ENCODE measurements at regions of chr17 and their contacts with region 1.

Region 1: GRCh38 chr17:5181509-5182305 is 10.0 kb downstream of the ZNF594 start:
- DNase-seq: no peak
- ATAC-seq: no peak
- H3K4me3 ChIP-seq: no peak overlapping the region
- H3K27ac ChIP-seq: no peak overlapping the region
- H3K4me1 ChIP-seq: no peaks in the 10 kb centered on the region
- CTCF ChIP-seq: no peak
- EP300 ChIP-seq: no peak
- POLR2A ChIP-seq: no peak
- RAD21 ChIP-seq: no peak

Region 2: GRCh38 chr17:5191541-5192417 is 10.1 kb after region 1 on chr17 and contains the start of gene ZNF594:
- CTCF ChIA-PET with region 1: interaction called, 20 read pairs
- POLR2A ChIA-PET with region 1: interaction called, 5 read pairs
- DNase-seq: peak; percentile 97 to 98
- ATAC-seq: peak; percentile 100
- H3K4me3 ChIP-seq: peak within 1 kb of the TSS; percentile 63
- H3K27ac ChIP-seq: peak within 1 kb of the TSS; percentile 61 to 87
- H3K4me1 ChIP-seq: no peaks in the 10 kb centered on the region
- CTCF ChIP-seq: peak; percentile 81
- EP300 ChIP-seq: no peak
- POLR2A ChIP-seq: no peak; the same call in 1 of the 2 replicates
- RAD21 ChIP-seq: peak in 1 of 2 experiments; percentile 20; a peak in 1 of 5 replicates
- polyA plus RNA-seq, gene ZNF594: 3.8 and 4.3 TPM in 2 replicates